Psoas muscle (tissue), 8 donors: ENCODE measurements at regions of chr6 and their contacts with region 1.

Region 1: GRCh38 chr6:53701333-53702218 is 36.0 kb upstream of the KLHL31 start:
- DNase-seq: no peak
- ATAC-seq: peak; percentile 66 to 80 (median 78)
- H3K4me3 ChIP-seq: peak overlapping the region; percentile 2
- H3K27ac ChIP-seq: peak overlapping the region; percentile 92
- H3K4me1 ChIP-seq: peaks cover 32% of the 10 kb centered on the region
- H3K27me3 ChIP-seq: no peaks in the 10 kb centered on the region
- CTCF ChIP-seq: no peak

Region 2: GRCh38 chr6:53664623-53665022 is 37.0 kb before region 1 on chr6:
- intact Hi-C with region 1: loop called in 1 of 2 experiments (anchors 5 kb)
- DNase-seq: peak; percentile 60 to 88
- ATAC-seq: peak; percentile 87 to 92 (median 89)
- H3K4me3 ChIP-seq: peak overlapping the region; percentile 73
- H3K27ac ChIP-seq: peak overlapping the region; percentile 95
- H3K4me1 ChIP-seq: peaks cover 40% of the 10 kb centered on the region
- H3K27me3 ChIP-seq: no peaks in the 10 kb centered on the region
- CTCF ChIP-seq: peak; percentile 9